ENCODE measurements at regions of chr3 and their contacts with region 1.

Region 1: GRCh38 chr3:59575113-59576001 is 525.5 kb upstream of the CFAP20DC start:
- DNase-seq: peak; percentile 95
- H3K4me3 ChIP-seq: no peak overlapping the region
- H3K27ac ChIP-seq: no peak overlapping the region
- H3K4me1 ChIP-seq: peaks cover 10 to 22% (median 20%) of the 10 kb centered on the region in 4 donors
- H3K27me3 ChIP-seq: no peaks in the 10 kb centered on the region
- CTCF ChIP-seq: peak; percentile 94 to 99 (median 96)
- EP300 ChIP-seq: no peak
- POLR2A ChIP-seq: no peak

Region 2: GRCh38 chr3:59115364-59116232 is 459.8 kb before region 1 on chr3:
- intact Hi-C with region 1: no loop called
- DNase-seq: no peak
- H3K4me3 ChIP-seq: no peak overlapping the region
- H3K27ac ChIP-seq: no peak overlapping the region
- H3K4me1 ChIP-seq: no peaks in the 10 kb centered on the region
- H3K27me3 ChIP-seq: no peaks in the 10 kb centered on the region
- CTCF ChIP-seq: no peak
- EP300 ChIP-seq: no peak
- POLR2A ChIP-seq: no peak

Region 3: GRCh38 chr3:59212128-59212779 is 363.1 kb before region 1 on chr3:
- intact Hi-C with region 1: loop called (anchors 10 kb)
- DNase-seq: no peak
- H3K4me3 ChIP-seq: no peak overlapping the region
- H3K27ac ChIP-seq: no peak overlapping the region
- H3K4me1 ChIP-seq: no peaks in the 10 kb centered on the region
- H3K27me3 ChIP-seq: peaks cover 0 to 16% (median 0%) of the 10 kb centered on the region in 4 donors
- CTCF ChIP-seq: peak; percentile 67 to 71 (median 67)
- EP300 ChIP-seq: no peak
- POLR2A ChIP-seq: no peak

Region 4: DNA sequence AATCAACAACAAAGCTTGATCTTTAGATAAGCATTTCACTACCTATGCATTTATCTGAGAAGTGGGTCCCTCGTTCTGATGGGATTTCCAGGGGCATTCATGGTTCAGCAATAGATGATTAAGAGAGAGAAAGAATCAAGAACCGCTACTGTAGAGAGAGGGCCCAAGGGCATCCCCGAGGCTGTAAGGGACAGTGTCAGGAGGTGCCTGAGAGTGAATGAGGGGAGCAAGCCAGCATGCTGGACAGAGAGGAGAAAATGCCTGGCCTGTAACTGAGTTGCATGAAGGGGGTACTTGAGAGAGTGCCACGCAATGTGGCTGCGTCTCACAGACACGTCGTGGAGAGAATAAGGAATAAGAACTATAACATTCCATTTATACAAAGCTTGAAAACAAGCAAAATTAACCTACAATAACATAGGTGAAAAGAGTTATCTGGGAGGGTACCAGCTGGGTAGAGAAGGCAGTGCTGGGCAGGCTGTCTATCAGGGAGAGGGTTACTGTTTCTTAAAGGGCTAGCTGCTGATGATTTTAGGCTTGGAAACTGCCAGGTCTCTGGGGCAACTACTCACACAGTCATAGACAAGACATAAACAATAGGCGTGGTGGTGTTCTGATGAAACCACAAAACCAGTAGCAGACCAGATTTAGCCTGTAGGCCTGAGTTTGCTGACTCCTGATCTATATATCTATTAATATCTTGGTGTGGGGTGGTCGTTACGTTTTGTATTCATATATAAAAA is 150.9 kb before region 1 on chr3:
- intact Hi-C with region 1: loop called (anchors 10 kb)
- DNase-seq: no peak
- H3K4me3 ChIP-seq: no peak overlapping the region
- H3K27ac ChIP-seq: no peak overlapping the region
- H3K4me1 ChIP-seq: peaks cover 0 to 19% (median 17%) of the 10 kb centered on the region in 4 donors
- H3K27me3 ChIP-seq: no peaks in the 10 kb centered on the region
- CTCF ChIP-seq: no peak
- EP300 ChIP-seq: no peak
- POLR2A ChIP-seq: no peak

Region 5: DNA sequence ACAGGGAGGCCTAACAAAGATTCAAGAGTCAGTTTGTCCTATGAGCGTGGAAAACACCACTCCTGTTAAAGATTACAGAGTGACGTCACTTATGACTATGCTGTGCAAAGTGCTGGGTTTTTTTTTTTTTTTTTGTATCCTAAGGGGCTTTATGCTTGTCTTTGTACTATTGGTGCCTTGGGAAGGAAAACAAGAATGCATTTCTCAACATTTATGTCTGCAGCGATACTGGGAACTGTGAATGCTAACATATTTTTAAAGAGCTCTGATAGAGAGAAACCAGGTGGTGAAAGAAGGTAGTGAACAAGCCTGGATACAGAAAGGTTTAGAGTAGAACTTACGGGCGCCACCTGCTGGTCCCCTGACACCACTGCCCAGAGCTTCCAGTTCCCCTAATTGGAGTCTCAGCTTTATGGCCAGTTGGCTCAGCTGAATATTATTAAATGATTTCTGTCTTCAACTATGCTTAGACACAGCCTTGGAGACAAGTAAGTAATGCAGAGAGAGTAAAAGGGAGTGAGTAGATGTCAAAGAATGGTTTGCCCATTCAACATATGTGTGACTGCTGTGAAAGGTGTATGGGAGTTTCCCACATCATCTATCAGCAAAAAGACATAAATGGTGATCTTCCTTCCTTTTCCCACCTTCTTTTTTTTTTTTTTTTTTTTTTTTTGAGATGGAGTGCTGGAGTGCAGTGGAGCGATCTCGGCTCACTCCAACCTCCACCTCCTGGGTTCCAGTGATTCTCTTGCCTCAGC is 282.4 kb after region 1 on chr3:
- intact Hi-C with region 1: loop called (anchors 2 kb)
- DNase-seq: no peak
- H3K4me3 ChIP-seq: no peak overlapping the region
- H3K27ac ChIP-seq: no peak overlapping the region
- H3K4me1 ChIP-seq: peaks cover 0 to 8% (median 0%) of the 10 kb centered on the region in 4 donors
- H3K27me3 ChIP-seq: no peaks in the 10 kb centered on the region
- CTCF ChIP-seq: peak; percentile 89 to 95 (median 91)
- EP300 ChIP-seq: no peak
- POLR2A ChIP-seq: no peak

Measured in esophagus muscularis mucosa (tissue), 4 donors.